ENCODE measurements at regions of chr4 and their contacts with region 1.

Region 1: GRCh38 chr4:6783053-6783981 is 790 bp downstream of the KIAA0232 start:
- DNase-seq: peak; percentile 87 to 92
- ATAC-seq: peak; percentile 76 to 90 (median 77)
- H3K4me3 ChIP-seq: peak overlapping the region; percentile 74
- H3K4me3 Mint-ChIP-seq: peak overlapping the region; percentile 90
- H3K27ac ChIP-seq: peak overlapping the region; percentile 97
- H3K27ac Mint-ChIP-seq: peak overlapping the region; percentile 84 to 88
- H3K4me1 ChIP-seq: peaks cover 25% of the 10 kb centered on the region
- H3K4me1 Mint-ChIP-seq: peaks cover 54 to 57% of the 10 kb centered on the region in 2 donors
- H3K27me3 ChIP-seq: no peaks in the 10 kb centered on the region
- H3K27me3 Mint-ChIP-seq: no peaks in the 10 kb centered on the region
- CTCF ChIP-seq: no peak

Region 2: DNA sequence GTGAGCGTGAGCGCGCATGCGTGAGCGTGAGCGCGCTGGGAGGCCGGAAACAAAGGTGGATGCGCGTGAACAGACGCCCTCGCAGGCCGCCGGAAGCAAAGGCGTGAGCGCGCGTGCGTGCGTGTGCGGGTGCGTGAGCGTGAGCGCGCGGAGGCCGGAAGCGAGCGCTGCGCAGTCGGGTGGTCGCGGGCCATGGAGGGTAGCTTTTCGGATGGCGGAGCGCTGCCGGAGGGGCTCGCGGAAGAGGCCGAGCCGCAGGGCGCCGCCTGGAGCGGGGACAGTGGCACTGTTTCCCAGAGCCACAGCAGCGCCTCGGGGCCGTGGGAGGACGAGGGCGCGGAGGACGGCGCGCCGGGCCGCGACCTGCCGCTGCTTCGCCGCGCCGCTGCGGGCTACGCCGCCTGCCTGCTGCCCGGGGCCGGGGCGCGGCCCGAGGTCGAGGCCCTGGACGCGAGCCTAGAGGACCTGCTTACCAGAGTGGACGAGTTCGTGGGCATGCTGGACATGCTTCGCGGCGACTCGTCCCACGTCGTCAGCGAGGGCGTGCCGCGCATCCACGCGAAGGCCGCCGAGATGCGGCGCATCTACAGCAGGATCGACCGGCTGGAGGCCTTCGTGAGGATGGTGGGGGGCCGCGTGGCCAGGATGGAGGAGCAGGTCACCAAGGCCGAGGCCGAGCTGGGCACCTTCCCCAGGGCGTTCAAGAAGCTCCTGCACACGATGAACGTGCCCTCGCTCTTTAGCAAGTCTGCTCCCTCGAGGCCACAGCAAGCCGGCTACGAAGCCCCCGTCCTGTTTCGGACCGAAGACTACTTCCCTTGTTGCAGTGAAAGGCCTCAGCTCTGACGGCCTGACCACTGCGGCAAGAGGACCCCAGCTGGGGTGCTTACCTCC is 67.1 kb before region 1 on chr4 and contains the start of gene BLOC1S4:
- intact Hi-C with region 1: loop called (anchors 2 kb)
- DNase-seq: peak; percentile 88 to 99
- ATAC-seq: peak; percentile 84 to 94 (median 86)
- H3K4me3 ChIP-seq: peak within 1 kb of the TSS; percentile 81
- H3K4me3 Mint-ChIP-seq: peak within 1 kb of the TSS; percentile 98
- H3K27ac ChIP-seq: peak within 1 kb of the TSS; percentile 83
- H3K27ac Mint-ChIP-seq: peak within 1 kb of the TSS; percentile 98
- H3K4me1 ChIP-seq: peaks cover 27% of the 10 kb centered on the region
- H3K4me1 Mint-ChIP-seq: peaks cover 29 to 32% of the 10 kb centered on the region in 2 donors
- H3K27me3 ChIP-seq: no peaks in the 10 kb centered on the region
- H3K27me3 Mint-ChIP-seq: no peaks in the 10 kb centered on the region
- CTCF ChIP-seq: no peak
- total RNA-seq, gene BLOC1S4: 18.9 to 20.1 (median 20.0) TPM

Region 3: GRCh38 chr4:6825403-6825802 is 42.1 kb after region 1 on chr4:
- intact Hi-C with region 1: loop called (anchors 1 kb)
- DNase-seq: peak in 1 of 2 donors; percentile 25
- ATAC-seq: peak; percentile 70 to 82 (median 80)
- H3K4me3 ChIP-seq: no peak overlapping the region
- H3K4me3 Mint-ChIP-seq: peak overlapping the region; percentile 81
- H3K27ac ChIP-seq: peak overlapping the region; percentile 74
- H3K27ac Mint-ChIP-seq: peak overlapping the region; percentile 90 to 95
- H3K4me1 ChIP-seq: peaks cover 30% of the 10 kb centered on the region
- H3K4me1 Mint-ChIP-seq: peaks cover 53 to 54% of the 10 kb centered on the region in 2 donors
- H3K27me3 ChIP-seq: no peaks in the 10 kb centered on the region
- H3K27me3 Mint-ChIP-seq: no peaks in the 10 kb centered on the region
- CTCF ChIP-seq: no peak

Region 4: DNA sequence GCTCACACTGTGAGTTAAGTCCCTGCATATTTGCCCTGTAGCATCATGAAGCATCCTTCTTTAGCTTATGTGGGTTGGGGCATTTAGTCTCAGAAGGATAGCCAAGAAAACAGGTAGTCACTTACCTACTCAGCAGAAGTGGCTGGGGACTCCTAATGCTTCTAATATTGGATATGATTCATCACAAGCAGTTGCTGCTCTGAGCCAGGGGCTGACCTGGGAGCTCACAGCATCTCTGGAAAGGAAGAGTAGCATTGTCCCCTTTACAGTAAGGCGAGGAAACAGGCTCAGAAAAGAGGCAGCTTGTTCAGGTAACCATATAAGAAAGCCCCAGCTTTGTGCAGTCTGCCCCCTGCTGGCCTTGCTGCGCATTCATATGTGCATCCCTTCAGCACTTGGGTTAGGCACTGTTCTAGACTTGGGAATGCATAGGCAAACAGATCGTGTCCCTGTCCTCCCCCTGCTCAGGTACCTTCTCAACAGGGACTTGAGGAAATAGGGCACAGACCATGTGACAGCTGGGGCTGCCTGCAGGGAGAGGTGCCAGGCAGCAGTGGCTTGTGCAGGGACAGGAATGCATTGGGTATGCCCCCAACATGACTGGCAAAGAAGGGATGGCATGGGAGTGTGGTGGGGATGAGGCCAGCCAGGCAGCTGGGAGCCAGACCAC is 90.6 kb after region 1 on chr4:
- intact Hi-C with region 1: loop called (anchors 5 kb)
- DNase-seq: peak; percentile 78 to 87
- ATAC-seq: peak; percentile 76 to 95 (median 92)
- H3K4me3 ChIP-seq: no peak overlapping the region
- H3K4me3 Mint-ChIP-seq: no peak overlapping the region
- H3K27ac ChIP-seq: no peak overlapping the region
- H3K27ac Mint-ChIP-seq: peak overlapping the region in 1 of 2 donors; percentile 52
- H3K4me1 ChIP-seq: peaks cover 19% of the 10 kb centered on the region
- H3K4me1 Mint-ChIP-seq: peaks cover 14 to 20% of the 10 kb centered on the region in 2 donors
- H3K27me3 ChIP-seq: no peaks in the 10 kb centered on the region
- H3K27me3 Mint-ChIP-seq: no peaks in the 10 kb centered on the region
- CTCF ChIP-seq: peak; percentile 92

Measured in natural killer cell (primary cell).